Sciatic nerve (tissue), 2 donors: ENCODE measurements at regions of chr15 and their contacts with region 1.

Region 1: GRCh38 chr15:57427367-57427821 is 51.1 kb downstream of the CGNL1 start:
- DNase-seq: no peak
- ATAC-seq: peak; percentile 85

Region 2: GRCh38 chr15:57387564-57388076 is 39.8 kb before region 1 on chr15:
- intact Hi-C with region 1: loop called (anchors 5 kb)
- DNase-seq: no peak
- ATAC-seq: no peak